Dorsolateral prefrontal cortex (tissue), 120 donors: ENCODE measurements at regions of chr1 and their contacts with region 1.

Region 1: GRCh38 chr1:184222652-184223052 is 164.2 kb upstream of the C1orf21 start:
- DNase-seq: peak in 8 of 10 donors; percentile 21 to 70 (median 44)
- H3K4me3 ChIP-seq: peak overlapping the region in 49 of 59 donors; percentile 5 to 58 (median 37)
- H3K27ac ChIP-seq: peak overlapping the region in 4 of 59 donors; percentile 1 to 57 (median 33)
- H3K27me3 ChIP-seq: no peaks in the 10 kb centered on the region
- CTCF ChIP-seq: peak; percentile 78 to 96 (median 90)

Region 2: GRCh38 chr1:183655562-183656075 is 567.0 kb before region 1 on chr1:
- intact Hi-C with region 1: loop called in 1 of 2 experiments (anchors 10 kb)
- DNase-seq: peak; percentile 76 to 91 (median 82)
- H3K4me3 ChIP-seq: peak overlapping the region in 3 of 59 donors; percentile 9 to 13 (median 12)
- H3K27ac ChIP-seq: peak overlapping the region in 39 of 59 donors; percentile 3 to 78 (median 51)
- H3K27me3 ChIP-seq: no peaks in the 10 kb centered on the region
- CTCF ChIP-seq: peak; percentile 83 to 99 (median 96)

Region 3: DNA sequence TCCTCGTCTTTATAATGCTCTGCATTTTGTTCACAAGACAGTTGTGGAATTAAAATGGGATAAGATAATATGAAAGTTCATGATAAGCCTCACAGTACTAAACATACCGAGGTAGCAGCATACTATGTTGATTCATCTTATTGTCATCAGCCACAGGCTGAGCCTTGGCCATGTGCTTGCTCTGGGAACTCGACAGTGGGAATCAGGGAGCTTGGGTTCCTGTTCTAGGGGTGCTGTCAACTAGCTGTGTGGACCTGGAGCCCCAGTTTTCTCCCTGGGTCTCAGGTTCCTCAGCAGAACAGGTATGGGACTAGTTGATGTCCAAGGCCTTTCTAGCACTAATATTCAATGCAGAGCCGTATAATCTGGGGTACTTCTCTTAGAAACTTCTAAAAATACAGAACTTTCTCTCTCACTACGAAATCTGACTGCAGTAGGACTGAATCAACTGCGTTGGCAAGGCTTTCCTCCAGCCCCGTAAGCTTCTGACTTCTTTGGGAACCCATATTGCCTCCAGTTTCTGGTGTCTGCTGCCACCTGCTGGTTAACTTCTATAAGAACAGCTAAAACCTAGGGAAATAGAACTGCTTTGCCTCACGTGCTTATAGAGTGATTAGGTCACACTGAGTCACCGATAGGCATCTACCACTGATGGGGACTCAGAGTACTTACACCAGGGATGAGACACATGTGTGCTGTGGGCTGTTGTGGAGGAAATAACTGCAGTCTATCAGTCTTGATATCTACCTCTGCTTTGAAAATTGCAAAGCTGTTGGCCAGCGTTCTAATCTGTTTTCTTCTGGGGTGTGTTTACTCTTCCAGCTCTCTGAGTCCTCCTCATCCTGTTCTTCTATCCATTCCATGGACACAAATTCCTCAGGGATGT is 306.8 kb before region 1 on chr1:
- intact Hi-C with region 1: loop called (anchors 5 to 10 kb)
- DNase-seq: peak in 8 of 10 donors; percentile 65 to 82 (median 72)
- H3K4me3 ChIP-seq: peak overlapping the region in 17 of 59 donors; percentile 4 to 44 (median 21)
- H3K27ac ChIP-seq: peak overlapping the region; percentile 20 to 100 (median 96)
- H3K27me3 ChIP-seq: no peaks in the 10 kb centered on the region
- CTCF ChIP-seq: peak; percentile 88 to 100 (median 95)

Region 4: GRCh38 chr1:183922197-183922596 is 300.5 kb before region 1 on chr1:
- intact Hi-C with region 1: loop called (anchors 5 to 10 kb)
- DNase-seq: no peak
- H3K4me3 ChIP-seq: no peak overlapping the region
- H3K27ac ChIP-seq: peak overlapping the region in 58 of 59 donors; percentile 84 to 100 (median 97)
- H3K27me3 ChIP-seq: no peaks in the 10 kb centered on the region
- CTCF ChIP-seq: peak in 9 of 56 donors; percentile 11 to 43 (median 31)

Region 5: DNA sequence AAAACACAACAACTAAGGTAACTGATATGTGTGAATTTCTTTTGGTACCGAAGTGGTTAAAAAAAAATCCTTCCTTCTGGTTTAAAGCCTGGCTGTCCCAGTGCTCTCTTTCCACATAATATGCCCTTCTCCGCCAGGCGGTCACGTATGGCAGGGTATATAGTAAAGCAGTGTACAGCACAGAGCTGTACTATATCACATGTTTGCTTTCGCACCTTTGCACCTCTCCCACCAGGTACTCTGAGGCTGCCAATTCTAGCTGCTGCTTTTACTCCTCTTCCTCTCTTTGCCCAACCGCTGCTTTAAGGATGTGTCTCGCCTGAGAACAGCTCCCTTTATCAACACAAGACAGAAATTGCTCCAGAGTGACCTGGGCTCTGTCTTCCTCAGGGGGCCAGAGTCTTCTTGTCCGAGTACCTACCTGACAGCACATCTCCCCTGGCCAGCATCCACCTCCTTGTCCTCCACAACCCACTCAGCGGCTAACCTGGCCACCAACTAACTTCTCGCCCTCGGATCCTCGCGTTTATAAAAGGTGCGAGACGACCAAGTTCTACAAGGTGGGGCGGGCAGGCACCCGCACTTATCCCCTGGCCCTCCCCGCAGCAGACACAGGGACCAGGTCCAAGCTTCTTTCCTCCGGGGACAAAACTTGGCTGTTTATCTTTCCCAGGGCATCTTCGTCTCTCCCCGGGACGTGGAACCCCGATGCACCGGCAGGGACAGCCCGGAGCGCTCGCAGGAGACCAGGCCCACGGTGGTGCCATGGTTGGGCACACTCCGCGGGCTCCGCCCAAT is 186.7 kb before region 1 on chr1:
- intact Hi-C with region 1: no loop called
- DNase-seq: peak in 4 of 10 donors; percentile 31 to 74 (median 60)
- H3K4me3 ChIP-seq: peak overlapping the region; percentile 56 to 91 (median 80)
- H3K27ac ChIP-seq: peak overlapping the region; percentile 90 to 100 (median 98)
- H3K27me3 ChIP-seq: no peaks in the 10 kb centered on the region
- CTCF ChIP-seq: peak in 8 of 56 donors; percentile 4 to 37 (median 18)

Region 6: GRCh38 chr1:184075055-184076029 is 147.3 kb before region 1 on chr1:
- intact Hi-C with region 1: loop called (anchors 2 to 5 kb)
- DNase-seq: peak in 3 of 10 donors; percentile 10 to 53 (median 36)
- H3K4me3 ChIP-seq: no peak overlapping the region
- H3K27ac ChIP-seq: peak overlapping the region in 55 of 59 donors; percentile 21 to 86 (median 69)
- H3K27me3 ChIP-seq: no peaks in the 10 kb centered on the region
- CTCF ChIP-seq: peak; percentile 69 to 98 (median 84)

Region 7: DNA sequence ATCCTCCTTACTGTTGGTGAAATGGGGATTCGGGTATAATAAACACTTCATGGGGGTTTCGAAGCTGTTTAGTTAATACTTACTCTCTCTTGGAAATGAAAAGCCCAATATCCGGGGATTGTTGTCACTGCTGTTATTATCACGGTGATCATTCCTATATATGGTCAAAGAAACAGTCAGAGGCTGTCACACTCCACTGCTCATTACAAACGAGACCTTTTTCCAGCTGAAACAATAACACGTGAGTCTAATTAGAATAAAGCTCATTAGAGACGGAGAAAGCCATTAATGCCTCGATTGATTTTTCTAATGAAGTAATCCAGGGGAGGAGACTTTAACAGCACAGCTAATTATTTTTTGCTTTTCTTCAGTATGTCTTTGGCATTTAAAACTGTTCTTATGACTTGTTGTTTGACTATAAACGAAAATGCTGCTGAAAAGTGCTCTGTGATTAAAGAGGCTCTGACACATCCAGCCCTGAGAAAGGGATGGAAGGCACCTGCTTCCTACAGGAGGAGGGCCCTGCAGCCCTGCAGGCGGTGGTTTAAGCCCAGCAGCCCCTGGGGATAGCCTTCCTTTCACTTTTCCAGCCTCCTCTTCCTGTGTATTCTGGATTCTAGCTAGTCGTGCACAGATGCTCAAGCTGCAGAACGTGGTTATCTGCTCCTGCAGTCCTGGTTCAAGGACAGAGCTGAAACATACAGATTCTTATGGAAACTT is 388.4 kb after region 1 on chr1:
- intact Hi-C with region 1: no loop called
- DNase-seq: no peak
- H3K4me3 ChIP-seq: peak overlapping the region in 45 of 59 donors; percentile 0 to 56 (median 29)
- H3K27ac ChIP-seq: peak overlapping the region in 49 of 59 donors; percentile 4 to 79 (median 51)
- H3K27me3 ChIP-seq: no peaks in the 10 kb centered on the region
- CTCF ChIP-seq: no peak